Aorta (tissue), 5 donors: ENCODE measurements at regions of chr15 and their contacts with region 1.

Region 1: DNA sequence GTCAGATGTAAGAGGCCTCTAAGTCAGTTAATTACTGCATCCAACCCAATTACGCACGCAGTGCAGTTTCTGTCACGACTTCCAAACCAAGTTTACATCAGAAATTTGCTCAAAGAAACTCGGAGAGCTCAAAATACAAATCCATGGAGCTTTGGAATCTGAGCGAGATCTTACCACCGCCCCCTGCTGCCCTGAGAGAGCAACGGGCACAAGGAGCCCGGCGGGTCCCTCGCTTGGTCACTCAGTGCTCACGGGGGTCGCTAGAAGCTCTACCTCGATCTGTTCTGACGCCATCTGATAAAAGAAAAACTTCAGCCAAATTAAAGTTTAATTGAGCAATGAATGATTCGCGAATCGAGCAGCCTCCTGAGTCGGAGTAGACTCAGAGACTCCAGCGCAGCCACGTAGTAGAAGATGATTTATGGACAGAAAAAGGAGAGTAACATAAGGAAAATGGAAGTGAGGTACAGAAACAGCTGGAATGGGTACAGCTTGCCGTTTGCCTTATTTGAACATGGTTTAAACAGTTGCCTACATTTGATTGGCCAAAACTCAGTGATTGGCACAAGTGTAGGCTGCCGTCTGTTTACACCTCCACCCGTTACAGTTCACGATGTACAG is 232.7 kb upstream of the ATP10A start:
- DNase-seq: no peak
- ATAC-seq: no peak
- H3K4me3 ChIP-seq: no peak overlapping the region
- H3K27ac ChIP-seq: no peak overlapping the region
- H3K4me1 ChIP-seq: no peaks in the 10 kb centered on the region
- H3K27me3 ChIP-seq: no peaks in the 10 kb centered on the region

Region 2: DNA sequence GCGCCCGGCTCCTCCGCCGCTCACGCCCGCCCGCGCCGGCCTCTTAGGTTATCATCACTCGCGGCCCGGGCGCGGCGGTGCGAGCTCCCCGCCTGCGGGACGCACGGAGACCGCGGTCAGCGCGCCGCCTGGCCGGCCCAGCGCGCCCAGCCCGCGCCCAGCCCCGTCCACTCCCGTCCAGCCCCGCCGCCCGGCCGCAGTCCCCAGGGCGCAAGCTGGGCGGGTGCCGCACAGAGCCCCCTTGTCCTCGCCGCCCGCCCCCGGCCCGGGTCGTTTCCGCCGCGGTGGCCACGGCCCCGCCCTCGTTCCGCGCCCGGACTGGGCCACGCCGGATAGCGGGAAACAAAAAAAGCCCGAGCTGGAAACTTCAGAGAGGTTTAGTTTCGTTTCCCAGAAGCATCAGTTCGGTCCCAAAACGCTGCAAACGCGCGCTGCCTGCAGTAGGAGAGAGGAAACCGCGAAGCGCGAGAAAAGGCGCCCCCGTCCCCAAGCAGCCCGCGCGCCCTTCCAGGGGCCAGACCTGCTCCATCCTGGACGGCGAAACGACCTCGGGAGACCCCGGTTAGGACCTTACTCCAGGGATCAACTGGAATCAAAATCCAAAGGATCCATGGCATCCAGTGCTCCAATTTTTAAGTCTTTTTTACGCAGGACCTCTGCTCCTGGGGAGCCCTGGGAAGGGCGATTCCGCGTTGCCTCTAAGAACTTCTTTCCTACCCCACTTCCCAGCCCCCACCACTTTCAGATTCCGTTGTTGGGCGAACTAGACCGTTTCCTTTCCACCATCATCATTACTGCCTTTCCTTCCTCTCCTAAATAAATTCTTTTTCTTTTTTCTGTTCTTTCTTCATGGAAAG is 232.5 kb before region 1 on chr15 and contains the start of gene ATP10A:
- intact Hi-C with region 1: no loop called
- DNase-seq: peak; percentile 68 to 88
- ATAC-seq: peak; percentile 24
- H3K4me3 ChIP-seq: peak within 1 kb of the TSS; percentile 64 to 96
- H3K27ac ChIP-seq: peak within 1 kb of the TSS; percentile 77 to 82
- H3K4me1 ChIP-seq: no peaks in the 10 kb centered on the region
- H3K27me3 ChIP-seq: no peaks in the 10 kb centered on the region
- total RNA-seq, gene ATP10A: 19.9 to 55.0 TPM

Region 3: DNA sequence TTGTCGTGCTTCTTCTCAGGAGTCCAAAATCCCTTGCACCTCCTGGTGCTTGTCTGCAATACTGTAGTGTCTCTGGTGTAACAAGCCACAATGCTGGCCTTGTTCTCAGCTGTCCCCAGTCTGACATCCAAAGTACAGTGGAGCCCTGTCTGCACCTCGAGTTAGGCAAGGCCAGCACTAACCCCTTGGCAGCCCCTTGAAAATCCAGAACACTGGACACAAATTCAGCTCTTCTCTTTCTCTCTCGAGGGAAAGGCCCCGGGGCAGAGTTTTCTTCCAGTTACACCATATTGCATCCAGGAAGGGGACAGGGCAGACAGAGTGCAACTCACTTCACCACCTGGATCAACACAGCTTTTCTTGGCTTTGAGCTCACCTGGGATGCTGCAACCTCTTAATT is 141.4 kb before region 1 on chr15:
- intact Hi-C with region 1: loop called in 1 of 2 experiments (anchors 10 kb)
- DNase-seq: no peak
- ATAC-seq: no peak
- H3K4me3 ChIP-seq: no peak overlapping the region
- H3K27ac ChIP-seq: no peak overlapping the region
- H3K4me1 ChIP-seq: no peaks in the 10 kb centered on the region
- H3K27me3 ChIP-seq: no peaks in the 10 kb centered on the region

Region 4: GRCh38 chr15:26037369-26037768 is 58.5 kb before region 1 on chr15:
- intact Hi-C with region 1: loop called in 1 of 2 experiments (anchors 5 kb)
- DNase-seq: no peak
- ATAC-seq: no peak
- H3K4me3 ChIP-seq: no peak overlapping the region
- H3K27ac ChIP-seq: no peak overlapping the region
- H3K4me1 ChIP-seq: no peaks in the 10 kb centered on the region
- H3K27me3 ChIP-seq: no peaks in the 10 kb centered on the region

Region 5: GRCh38 chr15:26050984-26051383 is 44.8 kb before region 1 on chr15:
- intact Hi-C with region 1: no loop called
- DNase-seq: no peak
- ATAC-seq: no peak
- H3K4me3 ChIP-seq: no peak overlapping the region
- H3K27ac ChIP-seq: no peak overlapping the region
- H3K4me1 ChIP-seq: no peaks in the 10 kb centered on the region
- H3K27me3 ChIP-seq: no peaks in the 10 kb centered on the region

Region 6: GRCh38 chr15:26115229-26115943 is 19.6 kb after region 1 on chr15:
- intact Hi-C with region 1: no loop called
- DNase-seq: no peak
- ATAC-seq: no peak
- H3K4me3 ChIP-seq: no peak overlapping the region
- H3K27ac ChIP-seq: no peak overlapping the region
- H3K4me1 ChIP-seq: no peaks in the 10 kb centered on the region
- H3K27me3 ChIP-seq: no peaks in the 10 kb centered on the region